ENCODE measurements at regions of chr12 and their contacts with region 1.

Region 1: GRCh38 chr12:47837190-47838171 is 17.8 kb upstream of the HDAC7 start:
- DNase-seq: peak; percentile 82 to 89
- ATAC-seq: peak; percentile 51 to 83; a peak in 5 of 6 replicates
- H3K4me3 ChIP-seq: no peak overlapping the region
- H3K27ac ChIP-seq: no peak overlapping the region; a peak in 1 of 6 replicates
- H3K4me1 ChIP-seq: 0 out of 3 replicates have a peak, but pooled peaks cover 3% of the 10 kb centered on the region
- CTCF ChIP-seq: peak; percentile 91
- EP300 ChIP-seq: no peak
- POLR2A ChIP-seq: no peak
- RAD21 ChIP-seq: peak; percentile 94 to 96

Region 2: DNA sequence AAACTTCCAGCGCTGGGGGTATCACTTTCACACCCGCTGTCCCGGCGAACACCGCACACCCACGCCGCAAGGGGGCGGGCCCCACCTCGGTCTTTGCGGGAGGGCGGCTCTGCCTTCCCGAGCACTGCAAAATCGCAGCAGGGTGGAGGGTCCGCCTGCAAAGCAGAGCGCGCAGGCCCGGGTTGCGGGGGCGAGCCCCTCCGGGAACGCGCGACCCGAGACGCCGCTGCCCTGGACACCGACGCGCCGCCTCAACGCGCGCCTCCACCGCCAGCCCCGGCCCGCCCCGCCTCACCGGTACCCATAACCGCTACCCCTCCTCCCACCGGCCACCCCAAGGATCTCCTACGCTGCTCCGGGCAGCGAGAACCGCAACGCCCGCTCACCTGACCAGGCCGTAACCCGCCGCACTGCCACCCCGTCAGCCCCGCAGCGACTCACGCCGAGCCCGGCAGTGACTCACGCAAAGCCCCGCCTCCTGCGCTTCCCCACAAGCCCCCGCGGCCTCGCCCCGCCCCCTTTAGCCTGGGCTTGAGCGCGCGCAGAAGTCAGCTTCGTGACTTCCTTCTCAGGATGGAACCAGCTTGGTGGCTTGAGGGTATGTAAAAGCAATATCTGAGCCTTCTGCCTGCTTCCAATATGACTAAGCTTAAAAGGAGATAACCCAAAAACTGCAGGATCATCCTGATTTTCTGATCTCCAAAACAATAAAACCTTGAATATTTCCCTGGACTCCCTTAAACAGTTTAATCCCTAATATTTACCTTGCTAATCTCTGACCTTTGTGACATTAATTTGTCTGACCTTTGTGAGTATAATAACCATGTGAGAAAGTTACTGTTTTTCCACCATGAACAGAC is 131.7 kb before region 1 on chr12 and contains the start of gene RPAP3:
- CTCF ChIA-PET with region 1: interaction called, 320 read pairs
- POLR2A ChIA-PET with region 1: interaction called, 4 read pairs
- DNase-seq: peak; percentile 81 to 94
- ATAC-seq: peak; percentile 95 to 98
- H3K4me3 ChIP-seq: peak within 1 kb of the TSS; percentile 81
- H3K27ac ChIP-seq: peak within 1 kb of the TSS; percentile 90 to 96
- H3K4me1 ChIP-seq: peaks cover 21% of the 10 kb centered on the region; the same call in 2 of the 3 replicates
- CTCF ChIP-seq: peak; percentile 60
- EP300 ChIP-seq: no peak
- POLR2A ChIP-seq: peak; percentile 96
- RAD21 ChIP-seq: peak in 1 of 2 experiments; percentile 31; a peak in 1 of 5 replicates
- polyA plus RNA-seq, gene RPAP3: 51.9 and 74.6 TPM in 2 replicates

Region 3: DNA sequence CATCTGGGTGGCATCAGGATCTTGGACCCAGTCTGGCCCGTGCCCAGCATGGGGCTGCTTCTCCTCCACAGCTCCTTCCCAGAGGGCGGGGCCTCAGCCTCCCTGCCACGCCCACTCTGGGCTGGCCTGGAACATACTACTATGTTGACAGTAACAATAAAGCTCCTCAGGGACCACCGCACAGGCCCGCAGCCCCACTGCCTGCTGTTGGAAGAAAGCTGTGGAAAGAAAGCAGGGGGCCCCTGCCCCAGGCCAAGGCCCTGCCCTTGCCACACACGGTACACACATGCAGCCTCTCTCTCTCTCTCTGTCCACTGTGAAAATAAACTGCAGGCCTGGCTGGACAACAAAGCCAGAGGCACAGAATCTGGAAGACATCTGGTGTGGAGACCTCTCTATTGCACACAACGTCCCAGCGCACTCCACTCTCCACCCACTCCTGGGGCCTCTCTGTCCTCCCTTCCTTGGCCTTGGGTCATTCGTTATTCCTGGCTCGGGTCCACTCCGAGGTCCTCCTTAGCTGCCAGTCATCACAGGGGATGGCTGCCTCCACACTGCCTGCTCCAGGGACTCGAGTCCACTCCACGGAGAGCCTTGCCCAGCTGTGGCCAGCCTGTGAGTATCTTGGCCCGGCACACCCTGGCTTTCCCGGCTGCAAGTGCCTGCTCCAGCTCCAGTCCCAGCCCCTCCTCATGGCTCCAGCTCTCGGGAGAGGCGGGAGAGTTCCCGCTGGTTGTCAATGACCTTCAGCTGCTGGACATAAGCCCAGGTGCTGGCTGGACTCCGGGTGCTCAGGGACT is 100.4 kb before region 1 on chr12:
- CTCF ChIA-PET with region 1: interaction called, 259 read pairs
- POLR2A ChIA-PET with region 1: no interaction called
- DNase-seq: no peak
- ATAC-seq: peak in 1 of 2 experiments; percentile 18; a peak in 2 of 6 replicates
- H3K4me3 ChIP-seq: no peak overlapping the region
- H3K27ac ChIP-seq: no peak overlapping the region
- H3K4me1 ChIP-seq: peaks cover 8% of the 10 kb centered on the region
- CTCF ChIP-seq: no peak
- EP300 ChIP-seq: no peak
- POLR2A ChIP-seq: no peak
- RAD21 ChIP-seq: no peak

Region 4: DNA sequence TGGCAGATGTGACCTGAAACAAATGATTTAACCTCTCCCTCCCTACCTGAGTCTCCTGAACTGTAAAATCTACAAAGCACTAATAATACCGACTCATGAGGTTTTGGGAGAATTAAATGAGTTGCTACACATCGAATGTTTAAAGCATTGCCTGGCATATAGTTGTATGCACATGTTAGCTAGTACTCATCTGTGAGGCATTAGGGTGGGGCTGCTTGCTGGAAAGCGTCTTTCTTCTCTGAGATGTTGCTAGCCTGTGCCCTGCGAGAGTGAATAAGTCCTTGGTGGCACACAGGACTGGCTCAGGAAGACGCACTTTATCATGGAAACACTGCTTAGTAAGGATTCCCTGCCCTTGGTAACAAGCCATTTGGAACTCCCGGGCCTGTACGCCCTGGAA is 84.9 kb before region 1 on chr12:
- CTCF ChIA-PET with region 1: interaction called, 259 read pairs
- POLR2A ChIA-PET with region 1: no interaction called
- DNase-seq: no peak
- ATAC-seq: peak in 1 of 2 experiments; percentile 19; a peak in 2 of 6 replicates
- H3K4me3 ChIP-seq: no peak overlapping the region
- H3K27ac ChIP-seq: no peak overlapping the region
- H3K4me1 ChIP-seq: peaks cover 27% of the 10 kb centered on the region
- CTCF ChIP-seq: no peak
- EP300 ChIP-seq: no peak
- POLR2A ChIP-seq: no peak
- RAD21 ChIP-seq: no peak

Region 5: GRCh38 chr12:47779301-47779942 is 58.1 kb before region 1 on chr12:
- CTCF ChIA-PET with region 1: interaction called, 1,532 read pairs
- POLR2A ChIA-PET with region 1: no interaction called
- DNase-seq: peak; percentile 86 to 90
- ATAC-seq: peak; percentile 67 to 84
- H3K4me3 ChIP-seq: no peak overlapping the region
- H3K27ac ChIP-seq: peak overlapping the region in 1 of 2 experiments; percentile 7; a peak in 1 of 6 replicates
- H3K4me1 ChIP-seq: peaks cover 47% of the 10 kb centered on the region
- CTCF ChIP-seq: peak; percentile 93
- EP300 ChIP-seq: no peak
- POLR2A ChIP-seq: no peak
- RAD21 ChIP-seq: peak; percentile 83 to 93

Region 6: DNA sequence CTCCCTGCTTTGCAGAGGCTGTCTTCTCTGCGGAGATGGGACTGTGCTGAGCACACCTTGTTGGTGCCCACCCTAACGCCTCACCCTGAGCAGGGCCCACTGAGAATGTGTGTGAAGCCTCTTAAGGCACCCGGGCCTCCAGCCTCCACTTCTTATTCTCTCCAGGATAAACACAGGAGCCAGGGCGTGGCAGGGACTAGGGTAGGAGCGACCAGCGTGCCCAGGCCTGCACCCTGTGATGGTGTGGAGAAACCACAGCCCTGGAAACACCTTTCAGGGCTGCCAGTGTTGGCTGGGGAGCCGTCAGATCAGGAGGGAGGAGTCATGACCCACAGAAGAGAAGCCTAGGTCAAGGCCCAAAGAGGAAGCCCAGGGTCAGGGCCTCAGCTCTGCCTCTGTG is 26.0 kb after region 1 on chr12:
- CTCF ChIA-PET with region 1: interaction called, 24 read pairs
- POLR2A ChIA-PET with region 1: no interaction called
- DNase-seq: no peak
- ATAC-seq: no peak
- H3K4me3 ChIP-seq: no peak overlapping the region
- H3K27ac ChIP-seq: no peak overlapping the region
- H3K4me1 ChIP-seq: no peaks in the 10 kb centered on the region
- CTCF ChIP-seq: no peak
- EP300 ChIP-seq: no peak
- POLR2A ChIP-seq: no peak
- RAD21 ChIP-seq: no peak

Region 7: GRCh38 chr12:47949441-47950308 is 112.2 kb after region 1 on chr12:
- CTCF ChIA-PET with region 1: interaction called, 17 read pairs
- POLR2A ChIA-PET with region 1: no interaction called
- DNase-seq: peak; percentile 88 to 90
- ATAC-seq: peak; percentile 88 to 98
- H3K4me3 ChIP-seq: no peak overlapping the region
- H3K27ac ChIP-seq: peak overlapping the region in 1 of 2 experiments; percentile 36; a peak in 2 of 6 replicates
- H3K4me1 ChIP-seq: peaks cover 19% of the 10 kb centered on the region
- CTCF ChIP-seq: peak; percentile 86
- EP300 ChIP-seq: no peak
- POLR2A ChIP-seq: no peak
- RAD21 ChIP-seq: peak; percentile 79 to 84

Region 8: DNA sequence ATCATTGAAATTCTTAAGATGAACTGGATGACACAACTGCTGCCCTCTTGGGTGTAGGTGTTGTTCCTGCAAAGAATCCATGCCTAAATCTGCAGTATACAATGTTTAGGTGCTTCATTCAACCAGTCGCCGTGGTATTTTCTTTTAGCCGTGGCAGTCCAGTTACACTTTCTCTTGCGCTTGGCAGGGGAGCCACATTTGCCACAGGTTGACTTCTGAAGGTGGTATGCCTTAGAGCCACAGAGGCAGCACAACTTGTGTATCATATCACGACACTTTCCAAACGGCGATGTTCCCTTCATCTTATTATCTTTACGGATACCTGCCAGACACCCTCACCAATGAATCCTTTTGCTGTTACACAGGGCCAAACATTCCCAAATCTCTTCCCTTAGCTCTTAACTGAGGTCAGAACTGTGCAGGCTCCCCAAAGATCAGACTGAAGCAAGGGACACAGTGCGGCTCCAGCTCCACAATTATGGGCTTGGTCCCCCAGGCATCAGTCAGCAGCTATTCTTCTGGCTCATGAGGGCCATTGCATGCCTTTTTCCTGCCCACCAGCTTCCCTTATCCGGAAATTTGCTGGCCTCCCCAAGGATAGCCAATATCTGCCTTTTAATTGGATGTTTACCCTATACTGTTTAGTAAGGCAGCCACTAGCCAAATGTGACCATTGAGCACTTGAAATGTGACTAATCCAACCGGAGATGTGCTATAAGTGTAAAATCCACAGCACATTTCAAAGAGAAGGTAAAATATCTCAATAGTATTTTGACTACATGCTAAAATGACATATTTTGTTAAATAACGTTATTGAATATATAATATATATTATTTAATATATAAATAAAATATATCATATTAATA is 217.7 kb after region 1 on chr12:
- CTCF ChIA-PET with region 1: no interaction called
- POLR2A ChIA-PET with region 1: no interaction called
- DNase-seq: no peak
- ATAC-seq: no peak
- H3K4me3 ChIP-seq: no peak overlapping the region
- H3K27ac ChIP-seq: no peak overlapping the region
- H3K4me1 ChIP-seq: no peaks in the 10 kb centered on the region
- CTCF ChIP-seq: no peak
- EP300 ChIP-seq: no peak
- POLR2A ChIP-seq: no peak
- RAD21 ChIP-seq: no peak

Region 9: GRCh38 chr12:48235796-48236333 is 398.4 kb after region 1 on chr12:
- CTCF ChIA-PET with region 1: no interaction called
- POLR2A ChIA-PET with region 1: no interaction called
- DNase-seq: no peak
- ATAC-seq: no peak
- H3K4me3 ChIP-seq: no peak overlapping the region
- H3K27ac ChIP-seq: no peak overlapping the region
- H3K4me1 ChIP-seq: no peaks in the 10 kb centered on the region
- CTCF ChIP-seq: no peak
- EP300 ChIP-seq: no peak
- POLR2A ChIP-seq: no peak
- RAD21 ChIP-seq: no peak

Measured in A549 (cell line).